Posterior cingulate gyrus (tissue), 11 donors: ENCODE measurements at regions of chr7 and their contacts with region 1.

Region 1: GRCh38 chr7:99312316-99313203 is 13.1 kb upstream of the ARPC1A start:
- DNase-seq: peak in 8 of 10 donors; percentile 54 to 93 (median 77)

Region 2: DNA sequence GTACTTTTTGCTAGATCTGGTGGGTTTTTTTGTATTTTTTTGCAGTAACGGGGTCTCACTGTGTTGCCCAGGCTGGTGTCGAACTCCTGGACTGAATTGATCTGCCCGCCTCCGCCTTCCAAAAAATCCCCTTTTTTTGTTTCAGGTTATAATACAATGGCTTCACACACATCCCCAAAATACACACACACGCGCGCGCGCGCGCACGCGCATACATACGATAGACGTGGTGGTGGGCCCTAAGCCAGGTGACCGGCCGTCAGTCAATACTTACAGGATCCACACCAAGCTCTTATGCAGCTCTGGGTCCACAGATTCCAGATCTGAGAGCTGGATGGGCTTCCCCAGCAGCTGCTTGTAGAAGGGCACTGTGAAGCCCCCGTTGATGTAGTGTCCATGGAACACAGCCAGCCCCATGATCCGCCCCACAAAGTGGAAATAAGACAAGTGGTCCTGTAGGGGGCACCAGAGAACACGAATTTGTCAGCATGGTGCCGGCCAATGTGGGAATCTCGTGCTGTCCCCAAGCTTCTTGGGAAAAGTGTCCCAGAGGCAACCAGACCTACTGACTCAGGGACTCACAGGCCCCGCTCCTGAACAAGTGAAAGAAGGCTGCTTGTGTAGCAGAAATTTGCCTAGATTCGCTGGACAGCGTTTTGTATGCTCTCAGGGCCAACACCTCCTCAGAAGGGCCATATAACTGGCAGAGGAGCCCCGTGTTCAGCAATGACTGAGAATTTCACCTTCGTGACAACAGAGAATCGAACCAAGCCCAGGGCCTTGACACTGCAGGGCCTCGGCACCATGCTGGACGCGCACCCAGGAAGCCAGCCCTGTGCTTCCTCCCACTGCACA is 272.2 kb before region 1 on chr7:
- intact Hi-C with region 1: loop called (anchors 1 kb)
- DNase-seq: peak; percentile 70 to 97 (median 85)

Region 3: GRCh38 chr7:99447943-99448342 is 135.4 kb after region 1 on chr7:
- intact Hi-C with region 1: no loop called
- DNase-seq: no peak